GM12878 (cell line): ENCODE measurements at regions of chr19 and their contacts with region 1.

Region 1: DNA sequence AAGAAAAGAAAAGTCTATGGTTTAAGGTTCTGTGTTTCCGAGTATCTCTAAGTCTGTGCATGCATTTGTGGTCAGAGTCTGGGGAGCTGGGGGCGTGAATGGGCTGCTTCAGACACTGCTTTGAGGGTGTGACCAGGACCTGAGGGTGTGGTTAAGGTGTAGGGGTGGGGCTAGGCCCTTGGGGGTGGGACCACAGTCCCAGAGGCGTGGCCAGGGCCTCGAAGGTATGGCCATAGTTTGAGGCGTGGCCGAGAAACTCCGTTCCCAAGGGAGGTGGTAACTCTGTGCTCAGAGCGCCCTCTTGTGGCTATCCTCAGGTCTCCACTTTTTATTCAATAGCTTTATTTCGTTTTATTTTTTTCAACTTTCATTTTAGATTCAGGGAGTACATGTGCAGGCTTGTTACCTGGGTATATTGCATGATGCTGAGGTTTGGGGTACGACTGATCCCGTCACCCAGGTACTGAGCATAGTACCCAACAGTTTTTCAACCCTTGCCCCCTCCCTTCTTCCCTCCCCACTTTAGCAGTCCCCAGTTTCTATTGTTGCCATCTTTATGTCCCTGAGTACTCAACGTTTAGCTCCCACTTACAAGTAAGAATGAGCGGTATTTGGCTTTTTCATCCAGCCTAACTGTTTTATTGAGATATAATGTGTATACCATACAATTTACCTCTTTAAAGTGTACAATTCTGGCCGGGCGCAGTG is 7.0 kb upstream of the CBLC start:
- DNase-seq: peak; percentile 97
- ATAC-seq: peak; percentile 100
- H3K4me3 ChIP-seq: no peak overlapping the region
- H3K27ac ChIP-seq: peak overlapping the region; percentile 25; the same call in 1 of the 2 replicates
- H3K4me1 ChIP-seq: peaks cover 22% of the 10 kb centered on the region
- H3K27me3 ChIP-seq: no peaks in the 10 kb centered on the region
- CTCF ChIP-seq: peak; percentile 64 to 89 (median 64)
- EP300 ChIP-seq: no peak
- POLR2A ChIP-seq: no peak
- RAD21 ChIP-seq: peak; percentile 92

Region 2: GRCh38 chr19:44689056-44689895 is 81.4 kb before region 1 on chr19:
- CTCF ChIA-PET with region 1: interaction called, 155 read pairs
- POLR2A ChIA-PET with region 1: interaction called, 6 read pairs
- RAD21 ChIA-PET with region 1: interaction called, 84 read pairs
- SMC1A ChIA-PET with region 1: interaction called, 72 read pairs
- in situ Hi-C with region 1: no loop called
- intact Hi-C with region 1: loop called (anchors 1 kb)
- DNase-seq: no peak
- ATAC-seq: peak; percentile 54
- H3K4me3 ChIP-seq: no peak overlapping the region
- H3K27ac ChIP-seq: no peak overlapping the region
- H3K4me1 ChIP-seq: peaks cover 44% of the 10 kb centered on the region
- H3K27me3 ChIP-seq: no peaks in the 10 kb centered on the region
- CTCF ChIP-seq: peak; percentile 89 to 98 (median 92)
- EP300 ChIP-seq: no peak
- POLR2A ChIP-seq: no peak
- RAD21 ChIP-seq: peak; percentile 82

Region 3: DNA sequence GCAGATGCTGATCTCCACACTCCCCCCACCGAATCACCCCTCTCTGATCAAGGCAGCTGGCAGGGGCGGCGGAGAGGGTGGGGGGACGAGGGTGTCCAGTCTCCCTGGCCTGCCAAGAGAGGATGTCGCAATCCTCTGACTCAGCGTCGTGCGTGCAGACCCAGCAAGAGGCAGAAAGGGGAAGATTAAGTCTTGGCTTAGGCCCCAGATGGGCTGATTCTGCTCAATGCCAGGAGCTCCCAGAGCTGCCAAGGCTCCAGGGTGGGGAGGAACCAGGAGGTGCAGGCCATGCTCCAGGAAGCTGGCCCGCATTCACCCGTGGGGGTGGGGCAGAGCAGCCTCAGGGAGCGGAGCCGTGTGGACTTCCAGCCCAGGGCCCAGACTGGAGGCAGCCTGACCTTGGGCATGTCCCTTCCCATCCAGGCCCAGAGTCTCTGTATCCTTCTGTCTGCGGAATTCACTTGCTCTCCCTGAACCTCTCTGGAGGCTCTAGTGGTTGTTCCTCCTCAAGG is 28.8 kb before region 1 on chr19:
- CTCF ChIA-PET with region 1: interaction called, 10 read pairs
- POLR2A ChIA-PET with region 1: interaction called, 5 read pairs
- RAD21 ChIA-PET with region 1: interaction called, 18 read pairs
- SMC1A ChIA-PET with region 1: interaction called, 16 read pairs
- in situ Hi-C with region 1: no loop called
- intact Hi-C with region 1: no loop called
- DNase-seq: no peak
- ATAC-seq: no peak
- H3K4me3 ChIP-seq: no peak overlapping the region
- H3K27ac ChIP-seq: no peak overlapping the region
- H3K4me1 ChIP-seq: peaks cover 33% of the 10 kb centered on the region
- H3K27me3 ChIP-seq: no peaks in the 10 kb centered on the region
- CTCF ChIP-seq: no peak
- EP300 ChIP-seq: no peak
- POLR2A ChIP-seq: no peak
- RAD21 ChIP-seq: no peak

Region 4: GRCh38 chr19:44752816-44753618 is 17.7 kb before region 1 on chr19:
- CTCF ChIA-PET with region 1: interaction called, 11 read pairs
- POLR2A ChIA-PET with region 1: interaction called, 16 read pairs
- RAD21 ChIA-PET with region 1: interaction called, 36 read pairs
- SMC1A ChIA-PET with region 1: interaction called, 31 read pairs
- in situ Hi-C with region 1: no loop called
- intact Hi-C with region 1: loop called (anchors 1 kb)
- DNase-seq: peak; percentile 94
- ATAC-seq: peak; percentile 81
- H3K4me3 ChIP-seq: peak overlapping the region; percentile 98
- H3K27ac ChIP-seq: peak overlapping the region; percentile 95
- H3K4me1 ChIP-seq: peaks cover 34% of the 10 kb centered on the region
- H3K27me3 ChIP-seq: no peaks in the 10 kb centered on the region
- CTCF ChIP-seq: peak in 1 of 3 experiments; percentile 11; a peak in 1 of 6 replicates
- EP300 ChIP-seq: peak; percentile 98 to 99
- POLR2A ChIP-seq: peak; percentile 81
- RAD21 ChIP-seq: no peak

Region 5: DNA sequence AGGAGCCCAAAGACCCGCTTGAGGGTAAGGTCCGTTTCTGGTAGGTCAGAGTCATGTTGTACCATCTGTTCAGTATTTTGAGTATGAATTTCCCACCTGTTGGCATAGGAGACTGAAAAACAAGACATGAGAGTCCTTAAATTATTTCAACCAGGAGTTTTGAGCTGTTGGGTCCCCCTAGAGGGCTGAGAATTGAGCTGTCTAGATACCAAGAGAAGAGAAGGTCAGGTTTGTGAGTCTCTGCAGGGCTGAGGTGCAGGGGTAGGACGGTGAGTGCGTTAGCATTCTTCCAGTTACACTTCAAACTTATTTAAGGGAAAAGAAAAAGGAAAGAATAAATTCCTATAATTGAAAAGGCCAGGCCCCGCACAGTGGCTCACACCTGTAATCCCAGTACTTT is 12.0 kb after region 1 on chr19:
- CTCF ChIA-PET with region 1: interaction called, 40 read pairs
- POLR2A ChIA-PET with region 1: no interaction called
- RAD21 ChIA-PET with region 1: interaction called, 5 read pairs
- SMC1A ChIA-PET with region 1: interaction called, 16 read pairs
- in situ Hi-C with region 1: no loop called
- intact Hi-C with region 1: no loop called
- DNase-seq: no peak
- ATAC-seq: no peak
- H3K4me3 ChIP-seq: no peak overlapping the region
- H3K27ac ChIP-seq: no peak overlapping the region
- H3K4me1 ChIP-seq: no peaks in the 10 kb centered on the region; the same call in 1 of the 2 replicates
- H3K27me3 ChIP-seq: no peaks in the 10 kb centered on the region
- CTCF ChIP-seq: no peak
- EP300 ChIP-seq: no peak
- POLR2A ChIP-seq: no peak
- RAD21 ChIP-seq: no peak

Region 6: DNA sequence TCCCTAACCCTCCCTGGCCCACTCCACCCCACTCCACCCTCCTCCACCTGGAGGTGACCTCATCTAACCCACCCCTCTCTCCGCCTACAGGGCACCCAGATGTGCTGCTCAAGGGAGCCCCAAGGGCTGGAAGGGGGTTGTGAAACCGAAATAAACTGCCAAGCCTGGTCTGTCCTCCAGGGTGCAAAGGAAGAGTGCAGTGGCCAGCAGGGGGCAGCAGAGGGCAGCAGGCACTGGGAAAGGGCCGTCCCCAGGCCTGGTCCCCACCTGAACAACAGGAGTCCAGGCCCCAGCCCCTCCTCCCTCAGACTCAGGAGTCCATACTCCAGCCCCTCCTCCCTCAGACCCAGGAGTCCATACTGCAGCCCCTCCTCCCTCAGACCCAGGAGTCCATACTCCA is 29.8 kb after region 1 on chr19:
- CTCF ChIA-PET with region 1: interaction called, 10 read pairs
- POLR2A ChIA-PET with region 1: interaction called, 4 read pairs
- RAD21 ChIA-PET with region 1: no interaction called
- SMC1A ChIA-PET with region 1: interaction called, 7 read pairs
- in situ Hi-C with region 1: no loop called
- intact Hi-C with region 1: no loop called
- DNase-seq: peak; percentile 34
- ATAC-seq: peak; percentile 99
- H3K4me3 ChIP-seq: no peak overlapping the region
- H3K27ac ChIP-seq: no peak overlapping the region
- H3K4me1 ChIP-seq: peaks cover 21% of the 10 kb centered on the region
- H3K27me3 ChIP-seq: no peaks in the 10 kb centered on the region; a peak in 1 of 4 replicates
- CTCF ChIP-seq: peak; percentile 87 to 98 (median 95)
- EP300 ChIP-seq: no peak; a peak in 1 of 4 replicates
- POLR2A ChIP-seq: no peak
- RAD21 ChIP-seq: peak; percentile 72

Region 7: DNA sequence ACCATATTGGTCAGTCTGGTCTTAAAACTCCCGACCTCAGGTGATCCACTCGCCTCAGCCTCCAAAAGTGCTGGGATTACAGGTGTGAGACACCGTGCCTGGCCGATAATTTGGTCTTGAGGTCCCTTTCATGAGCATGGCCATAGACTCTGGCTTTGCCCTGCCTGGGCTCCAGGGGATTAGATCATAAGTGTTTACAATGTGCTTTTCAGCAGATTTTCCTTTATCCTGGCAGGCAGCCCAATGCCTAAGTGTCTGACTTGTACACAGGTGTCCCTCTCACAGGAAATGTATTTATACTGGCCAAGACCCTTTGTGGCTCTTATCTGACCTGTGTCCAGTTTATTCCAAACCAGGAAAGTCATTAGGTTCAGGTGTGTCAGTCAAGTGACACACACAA is 54.1 kb after region 1 on chr19:
- CTCF ChIA-PET with region 1: no interaction called
- POLR2A ChIA-PET with region 1: no interaction called
- RAD21 ChIA-PET with region 1: no interaction called
- SMC1A ChIA-PET with region 1: no interaction called
- in situ Hi-C with region 1: no loop called
- intact Hi-C with region 1: no loop called
- DNase-seq: no peak
- ATAC-seq: no peak
- H3K4me3 ChIP-seq: no peak overlapping the region
- H3K27ac ChIP-seq: no peak overlapping the region
- H3K4me1 ChIP-seq: no peaks in the 10 kb centered on the region
- H3K27me3 ChIP-seq: 0 out of 4 replicates have a peak, but pooled peaks cover 0 to 1% of the 10 kb centered on the region in 2 experiments
- CTCF ChIP-seq: no peak
- EP300 ChIP-seq: no peak
- POLR2A ChIP-seq: no peak
- RAD21 ChIP-seq: no peak

Region 8: GRCh38 chr19:44875666-44876451 is 105.2 kb after region 1 on chr19:
- CTCF ChIA-PET with region 1: no interaction called
- POLR2A ChIA-PET with region 1: no interaction called
- RAD21 ChIA-PET with region 1: no interaction called
- SMC1A ChIA-PET with region 1: no interaction called
- in situ Hi-C with region 1: no loop called
- intact Hi-C with region 1: no loop called
- DNase-seq: no peak
- ATAC-seq: no peak
- H3K4me3 ChIP-seq: no peak overlapping the region
- H3K27ac ChIP-seq: no peak overlapping the region
- H3K4me1 ChIP-seq: no peaks in the 10 kb centered on the region
- H3K27me3 ChIP-seq: no peaks in the 10 kb centered on the region; a peak in 2 of 4 replicates
- CTCF ChIP-seq: no peak
- EP300 ChIP-seq: no peak
- POLR2A ChIP-seq: no peak
- RAD21 ChIP-seq: no peak

Region 9: DNA sequence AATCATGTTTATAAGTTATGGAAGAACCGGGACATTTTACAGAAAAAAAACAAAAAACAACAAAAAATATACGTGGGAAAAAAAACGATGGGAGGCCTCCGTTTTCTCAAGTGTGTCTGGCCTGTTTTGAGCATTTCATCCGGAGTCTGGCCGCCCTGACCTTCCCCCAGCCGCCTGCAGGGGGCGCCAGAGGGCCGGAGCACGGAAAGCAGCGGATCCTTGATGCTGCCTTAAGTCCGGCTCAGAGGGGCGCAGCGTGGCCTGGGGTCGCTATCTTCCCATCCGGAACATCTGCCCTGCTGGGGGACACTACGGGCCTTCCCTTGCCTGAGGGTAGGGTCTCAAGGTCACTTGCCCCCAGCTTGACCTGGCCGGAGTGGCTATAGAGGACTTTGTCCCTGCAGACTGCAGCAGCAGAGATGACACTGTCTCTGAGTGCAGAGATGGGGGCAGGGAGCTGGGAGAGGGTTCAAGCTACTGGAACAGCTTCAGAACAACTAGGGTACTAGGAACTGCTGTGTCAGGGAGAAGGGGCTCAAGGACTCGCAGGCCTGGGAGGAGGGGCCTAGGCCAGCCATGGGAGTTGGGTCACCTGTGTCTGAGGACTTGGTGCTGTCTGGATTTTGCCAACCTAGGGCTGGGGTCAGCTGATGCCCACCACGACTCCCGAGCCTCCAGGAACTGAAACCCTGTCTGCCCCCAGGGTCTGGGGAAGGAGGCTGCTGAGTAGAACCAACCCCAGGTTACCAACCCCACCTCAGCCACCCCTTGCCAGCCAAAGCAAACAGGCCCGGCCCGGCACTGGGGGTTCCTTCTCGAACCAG is 133.1 kb after region 1 on chr19:
- CTCF ChIA-PET with region 1: no interaction called
- POLR2A ChIA-PET with region 1: no interaction called
- RAD21 ChIA-PET with region 1: no interaction called
- SMC1A ChIA-PET with region 1: no interaction called
- in situ Hi-C with region 1: no loop called
- intact Hi-C with region 1: no loop called
- DNase-seq: no peak
- ATAC-seq: peak; percentile 84
- H3K4me3 ChIP-seq: no peak overlapping the region
- H3K27ac ChIP-seq: no peak overlapping the region
- H3K4me1 ChIP-seq: no peaks in the 10 kb centered on the region
- H3K27me3 ChIP-seq: no peaks in the 10 kb centered on the region
- CTCF ChIP-seq: peak; percentile 93 to 99 (median 96)
- EP300 ChIP-seq: no peak
- POLR2A ChIP-seq: peak; percentile 25; the same call in 1 of the 2 replicates
- RAD21 ChIP-seq: peak; percentile 88

Region 10: GRCh38 chr19:45657520-45658167 is 886.9 kb after region 1 on chr19:
- CTCF ChIA-PET with region 1: no interaction called
- POLR2A ChIA-PET with region 1: no interaction called
- RAD21 ChIA-PET with region 1: no interaction called
- SMC1A ChIA-PET with region 1: no interaction called
- in situ Hi-C with region 1: no loop called
- intact Hi-C with region 1: no loop called
- DNase-seq: no peak
- ATAC-seq: no peak
- H3K4me3 ChIP-seq: no peak overlapping the region
- H3K27ac ChIP-seq: no peak overlapping the region
- H3K4me1 ChIP-seq: no peaks in the 10 kb centered on the region
- H3K27me3 ChIP-seq: no peaks in the 10 kb centered on the region
- CTCF ChIP-seq: no peak
- EP300 ChIP-seq: no peak
- POLR2A ChIP-seq: no peak
- RAD21 ChIP-seq: no peak